Thyroid gland (tissue), 4 donors: ENCODE measurements at regions of chr12 and their contacts with region 1.

Region 1: DNA sequence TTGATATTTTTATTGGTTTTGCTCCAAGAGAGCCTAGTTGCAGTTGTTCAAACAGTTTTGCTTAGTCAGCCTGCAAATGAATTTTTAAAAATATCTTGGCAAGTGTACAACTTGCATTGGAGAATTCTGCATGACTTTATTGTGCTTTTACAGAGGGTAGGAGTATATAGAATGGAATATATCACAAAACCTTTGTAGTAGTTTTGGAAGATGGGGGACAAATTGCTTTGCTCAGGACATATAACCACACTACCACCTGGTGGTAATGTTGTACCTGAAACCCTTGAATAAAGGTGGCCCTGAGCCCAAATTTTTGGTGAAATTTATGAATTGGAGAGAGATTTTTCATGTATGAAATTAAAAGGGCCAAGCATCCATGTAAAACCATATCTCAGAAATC is 645.2 kb downstream of the MED13L start:
- DNase-seq: no peak
- H3K4me3 ChIP-seq: no peak overlapping the region
- H3K27ac ChIP-seq: no peak overlapping the region
- H3K4me1 ChIP-seq: no peaks in the 10 kb centered on the region
- H3K27me3 ChIP-seq: no peaks in the 10 kb centered on the region
- CTCF ChIP-seq: peak in 4 of 6 experiments; percentile 42 to 59 (median 50)
- POLR2A ChIP-seq: no peak

Region 2: GRCh38 chr12:114662512-114663177 is 969.7 kb before region 1 on chr12:
- intact Hi-C with region 1: loop called (anchors 10 kb)
- DNase-seq: peak; percentile 93 to 94
- H3K4me3 ChIP-seq: no peak overlapping the region
- H3K27ac ChIP-seq: peak overlapping the region; percentile 92 to 99 (median 99)
- H3K4me1 ChIP-seq: peaks cover 9 to 26% of the 10 kb centered on the region in 2 donors
- H3K27me3 ChIP-seq: no peaks in the 10 kb centered on the region
- CTCF ChIP-seq: peak; percentile 74 to 98 (median 95)
- POLR2A ChIP-seq: peak in 1 of 2 donors; percentile 34

Region 3: GRCh38 chr12:115521771-115522409 is 110.4 kb before region 1 on chr12:
- intact Hi-C with region 1: no loop called
- DNase-seq: no peak
- H3K4me3 ChIP-seq: no peak overlapping the region
- H3K27ac ChIP-seq: no peak overlapping the region
- H3K4me1 ChIP-seq: no peaks in the 10 kb centered on the region
- H3K27me3 ChIP-seq: no peaks in the 10 kb centered on the region
- CTCF ChIP-seq: no peak
- POLR2A ChIP-seq: no peak

Region 4: DNA sequence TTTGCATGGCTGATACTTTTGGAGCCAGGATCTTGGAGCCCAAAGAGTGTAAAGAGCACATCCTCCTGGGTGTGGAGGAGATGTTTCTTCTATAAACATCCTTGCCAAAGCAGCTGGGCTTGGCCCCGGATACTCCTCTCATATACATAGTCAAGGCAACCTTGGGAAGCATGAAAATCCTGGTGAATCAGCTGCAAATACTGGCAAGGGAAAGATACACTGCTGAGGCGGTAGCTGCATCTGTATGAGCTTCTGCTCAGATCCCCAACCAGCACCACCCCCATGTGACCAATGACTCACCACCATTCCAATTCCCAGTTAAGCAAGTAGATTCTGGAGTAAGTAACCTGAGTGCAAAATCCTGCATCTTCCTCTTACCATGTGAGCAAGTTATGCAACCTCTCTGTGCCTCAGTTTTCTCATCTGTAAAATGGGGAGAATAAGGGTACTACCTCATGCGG is 77.8 kb after region 1 on chr12:
- intact Hi-C with region 1: no loop called
- DNase-seq: peak; percentile 17 to 22
- H3K4me3 ChIP-seq: no peak overlapping the region
- H3K27ac ChIP-seq: no peak overlapping the region
- H3K4me1 ChIP-seq: peaks cover 9 to 11% of the 10 kb centered on the region in 2 donors
- H3K27me3 ChIP-seq: no peaks in the 10 kb centered on the region
- CTCF ChIP-seq: no peak
- POLR2A ChIP-seq: no peak

Region 5: GRCh38 chr12:115740586-115741155 is 108.4 kb after region 1 on chr12:
- intact Hi-C with region 1: no loop called
- DNase-seq: no peak
- H3K4me3 ChIP-seq: no peak overlapping the region
- H3K27ac ChIP-seq: no peak overlapping the region
- H3K4me1 ChIP-seq: peaks cover 0 to 4% of the 10 kb centered on the region in 2 donors
- H3K27me3 ChIP-seq: no peaks in the 10 kb centered on the region
- CTCF ChIP-seq: no peak
- POLR2A ChIP-seq: no peak

Region 6: DNA sequence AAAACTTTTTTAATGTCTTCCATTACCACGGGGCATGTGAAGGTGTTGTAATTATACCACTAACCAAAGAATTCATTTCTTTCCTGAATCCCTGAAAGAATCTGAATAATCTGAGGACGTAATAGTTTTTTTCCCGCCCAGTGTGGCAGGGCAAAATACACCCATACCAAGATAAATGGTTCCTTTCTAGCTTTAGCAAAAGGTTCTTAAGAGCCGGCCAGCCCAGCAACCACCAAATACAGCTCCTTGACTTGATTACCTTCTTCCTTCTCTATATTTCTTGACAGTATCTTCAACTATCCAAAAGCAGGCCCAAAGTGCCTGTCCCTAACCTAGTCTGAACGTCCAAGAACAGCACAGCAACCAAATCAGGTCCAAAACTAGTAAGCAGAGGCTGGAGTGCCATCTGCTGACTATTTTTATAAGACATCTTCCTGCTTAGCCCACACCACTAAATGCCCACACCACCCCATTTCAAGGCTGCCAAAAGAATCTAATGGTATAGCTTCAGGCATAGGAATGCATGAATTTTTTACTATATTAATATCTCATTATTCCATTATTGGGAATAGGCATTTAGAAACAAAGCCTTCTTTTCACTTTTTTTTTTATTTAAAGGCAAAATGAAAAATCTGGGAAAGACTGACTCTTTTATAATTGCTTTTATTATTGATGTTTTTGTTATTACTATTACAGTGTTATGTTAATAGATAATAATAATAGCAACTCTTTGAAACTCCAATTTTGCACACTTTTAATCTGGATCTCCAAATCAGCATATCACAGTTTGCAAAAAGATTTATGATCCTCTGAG is 120.8 kb after region 1 on chr12:
- intact Hi-C with region 1: loop called (anchors 10 kb)
- DNase-seq: peak; percentile 46 to 51
- H3K4me3 ChIP-seq: no peak overlapping the region
- H3K27ac ChIP-seq: no peak overlapping the region
- H3K4me1 ChIP-seq: peaks cover 17% of the 10 kb centered on the region in 2 donors
- H3K27me3 ChIP-seq: no peaks in the 10 kb centered on the region
- CTCF ChIP-seq: peak in 5 of 6 experiments; percentile 40 to 93 (median 77)
- POLR2A ChIP-seq: no peak

Region 7: GRCh38 chr12:115801871-115802270 is 169.6 kb after region 1 on chr12:
- intact Hi-C with region 1: no loop called
- DNase-seq: no peak
- H3K4me3 ChIP-seq: no peak overlapping the region
- H3K27ac ChIP-seq: no peak overlapping the region
- H3K4me1 ChIP-seq: no peaks in the 10 kb centered on the region
- H3K27me3 ChIP-seq: no peaks in the 10 kb centered on the region
- CTCF ChIP-seq: no peak
- POLR2A ChIP-seq: no peak